ENCODE measurements at regions of chr1 and their contacts with region 1.

Region 1: DNA sequence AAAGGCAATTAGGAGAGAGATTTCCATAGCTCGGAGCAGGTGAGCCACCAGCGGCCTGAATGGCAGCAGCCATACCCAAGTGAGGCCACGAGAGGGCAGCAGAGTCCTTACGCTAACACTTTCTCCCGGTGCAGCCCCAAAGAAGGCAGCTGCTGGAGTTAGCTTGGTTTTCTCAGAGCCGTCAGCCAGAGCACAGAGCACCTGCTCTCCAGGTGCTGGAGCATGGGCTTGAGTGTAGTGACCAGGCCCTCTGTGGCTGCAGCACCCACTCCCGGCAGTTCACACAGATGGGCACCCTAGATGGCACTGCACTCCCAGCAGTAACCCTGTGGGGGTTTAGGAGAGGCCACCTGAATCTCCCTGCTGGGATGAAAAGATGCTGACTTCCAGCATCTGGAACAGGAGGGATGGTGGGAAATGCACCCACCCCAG is 45.8 kb downstream of the TMCC2 start:
- DNase-seq: peak; percentile 81 to 93
- ATAC-seq: peak; percentile 69

Region 2: GRCh38 chr1:205325334-205325884 is 51.8 kb after region 1 on chr1:
- intact Hi-C with region 1: loop called (anchors 2 to 5 kb)
- DNase-seq: peak in 1 of 2 donors; percentile 58
- ATAC-seq: peak; percentile 27